ENCODE measurements at regions of chr15 and their contacts with region 1.

Region 1: GRCh38 chr15:65184868-65185738 is at the start of gene CLPX:
- DNase-seq: peak; percentile 87
- ATAC-seq: peak; percentile 88
- H3K4me3 Mint-ChIP-seq: peak within 1 kb of the TSS; percentile 93
- H3K27ac Mint-ChIP-seq: peak within 1 kb of the TSS; percentile 89
- H3K4me1 Mint-ChIP-seq: peaks cover 26% of the 10 kb centered on the region
- H3K27me3 Mint-ChIP-seq: no peaks in the 10 kb centered on the region
- CTCF ChIP-seq: no peak
- total RNA-seq, gene CLPX: 52.2 and 53.5 TPM in 2 replicates

Region 2: GRCh38 chr15:64938192-64938591 is 246.9 kb before region 1 on chr15:
- CTCF ChIA-PET with region 1: no interaction called
- POLR2A ChIA-PET with region 1: interaction called, 11 read pairs
- intact Hi-C with region 1: no loop called
- DNase-seq: no peak
- ATAC-seq: no peak
- H3K4me3 Mint-ChIP-seq: no peak overlapping the region
- H3K27ac Mint-ChIP-seq: no peak overlapping the region
- H3K4me1 Mint-ChIP-seq: no peaks in the 10 kb centered on the region
- H3K27me3 Mint-ChIP-seq: no peaks in the 10 kb centered on the region
- CTCF ChIP-seq: no peak

Region 3: DNA sequence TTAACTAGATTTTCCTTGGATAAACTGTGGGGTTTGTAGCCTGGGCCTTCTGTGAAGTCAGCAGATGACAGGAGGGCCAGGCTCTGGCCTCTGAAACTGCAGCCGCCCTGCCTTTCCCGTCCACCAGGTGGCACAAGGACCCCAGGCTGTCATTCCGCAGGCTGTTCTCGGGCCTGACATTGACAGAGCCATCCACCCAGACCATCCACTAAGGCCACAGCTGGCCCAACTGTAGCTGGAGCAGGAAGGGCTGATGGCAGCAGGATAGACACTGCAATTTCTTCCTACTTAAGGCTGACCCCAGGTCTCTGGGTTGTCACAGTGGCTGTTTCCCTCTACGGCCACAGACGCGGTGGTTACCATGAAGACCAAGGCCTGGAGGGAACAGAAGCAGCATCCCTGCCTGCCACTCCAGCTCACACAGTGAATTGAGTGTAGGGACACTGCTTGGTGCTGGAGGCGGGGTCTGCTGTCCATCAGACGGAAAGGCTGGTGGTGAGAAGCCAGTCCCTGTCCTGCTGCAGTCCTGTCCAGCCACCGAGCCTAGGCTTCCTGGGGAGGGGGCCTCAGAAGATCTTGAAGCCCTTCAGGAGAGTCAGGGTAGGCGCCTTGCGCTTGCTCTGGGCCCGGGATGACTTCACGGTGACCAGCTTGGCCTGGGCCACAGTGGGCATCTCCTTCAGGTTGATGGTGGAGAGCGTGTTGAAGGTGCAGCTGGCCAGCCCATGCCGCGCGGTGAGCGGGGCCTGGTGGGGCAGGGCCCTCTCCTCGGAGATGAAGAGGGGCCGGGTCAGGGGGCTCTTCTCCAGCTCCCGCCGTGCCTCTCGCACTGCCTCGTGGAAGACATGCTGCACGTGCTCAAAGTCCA is 130.5 kb before region 1 on chr15:
- CTCF ChIA-PET with region 1: no interaction called
- POLR2A ChIA-PET with region 1: interaction called, 5 read pairs
- intact Hi-C with region 1: loop called (anchors 10 kb)
- DNase-seq: peak; percentile 44
- ATAC-seq: peak; percentile 61
- H3K4me3 Mint-ChIP-seq: no peak overlapping the region
- H3K27ac Mint-ChIP-seq: no peak overlapping the region
- H3K4me1 Mint-ChIP-seq: peaks cover 12% of the 10 kb centered on the region
- H3K27me3 Mint-ChIP-seq: no peaks in the 10 kb centered on the region
- CTCF ChIP-seq: no peak

Region 4: DNA sequence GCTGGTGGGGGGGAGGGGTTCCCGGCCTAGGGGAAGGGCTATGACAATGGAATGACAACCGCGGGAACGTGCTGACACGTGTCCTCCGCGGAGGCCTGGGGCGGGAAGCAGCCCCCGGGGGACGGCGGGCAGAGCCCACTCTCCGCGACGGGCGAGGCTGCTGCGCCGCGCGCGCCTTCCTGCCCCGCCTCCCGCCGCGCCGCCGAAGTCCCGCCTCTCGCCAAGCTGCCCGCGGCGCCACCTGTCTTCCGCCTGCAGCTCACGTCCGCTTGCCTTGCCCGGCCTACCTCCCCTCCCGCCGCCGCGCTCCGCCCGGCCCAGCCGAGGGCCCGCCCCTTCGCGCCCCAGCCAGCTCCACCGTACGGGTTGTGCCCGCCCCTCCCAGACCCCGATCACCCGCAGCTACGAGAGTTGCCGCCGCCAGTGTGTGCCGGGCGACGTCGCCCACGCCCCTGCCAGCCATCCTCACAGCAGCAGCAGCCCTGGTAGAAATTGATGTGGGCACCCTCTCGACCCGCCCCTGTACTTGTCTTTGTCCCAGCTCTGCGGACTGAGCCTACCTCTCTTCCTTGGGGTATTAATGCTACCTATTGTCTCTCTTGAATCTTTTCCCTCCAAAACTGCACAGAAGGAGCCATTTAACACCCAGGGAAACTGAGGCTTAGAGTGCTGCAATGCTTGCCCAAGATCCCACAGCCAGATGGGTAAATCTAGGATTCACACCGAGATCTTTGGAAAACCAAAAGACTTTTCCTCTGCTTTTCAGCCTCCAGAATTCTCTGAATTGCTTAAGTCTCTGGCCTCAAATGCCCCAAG is 101.8 kb after region 1 on chr15 and contains the start of gene PARP16:
- CTCF ChIA-PET with region 1: interaction called, 5 read pairs
- POLR2A ChIA-PET with region 1: interaction called, 64 read pairs
- intact Hi-C with region 1: loop called (anchors 1 kb)
- DNase-seq: peak; percentile 94
- ATAC-seq: peak; percentile 96
- H3K4me3 Mint-ChIP-seq: peak within 1 kb of the TSS; percentile 85
- H3K27ac Mint-ChIP-seq: peak within 1 kb of the TSS; percentile 90
- H3K4me1 Mint-ChIP-seq: peaks cover 27% of the 10 kb centered on the region
- H3K27me3 Mint-ChIP-seq: no peaks in the 10 kb centered on the region
- CTCF ChIP-seq: no peak
- total RNA-seq, gene PARP16: 11.2 and 11.5 TPM in 2 replicates

Region 5: DNA sequence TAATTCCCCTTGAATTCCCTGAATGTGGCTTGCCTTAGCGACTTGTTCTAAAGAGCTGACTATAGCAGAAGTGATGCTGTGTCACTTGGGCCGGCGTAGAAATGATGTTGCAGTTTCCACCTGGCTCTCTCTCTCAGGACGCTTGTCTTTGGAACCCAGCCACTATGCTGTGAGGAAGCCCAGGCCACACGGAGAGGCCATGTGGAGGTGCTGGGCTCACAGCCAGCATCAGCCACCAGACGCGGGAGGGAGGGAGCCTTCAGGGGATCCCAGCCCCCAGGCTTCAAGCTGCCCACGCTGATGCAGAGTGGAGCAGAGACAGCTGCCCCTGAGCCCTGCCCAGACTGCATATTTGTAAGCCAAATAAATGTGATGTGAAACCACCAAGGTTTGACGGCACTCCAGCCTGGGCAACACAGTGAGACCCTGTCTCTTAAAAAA is 138.0 kb after region 1 on chr15:
- CTCF ChIA-PET with region 1: no interaction called
- POLR2A ChIA-PET with region 1: no interaction called
- intact Hi-C with region 1: no loop called
- DNase-seq: no peak
- ATAC-seq: no peak
- H3K4me3 Mint-ChIP-seq: no peak overlapping the region
- H3K27ac Mint-ChIP-seq: no peak overlapping the region
- H3K4me1 Mint-ChIP-seq: peaks cover 2% of the 10 kb centered on the region
- H3K27me3 Mint-ChIP-seq: peaks cover 25% of the 10 kb centered on the region
- CTCF ChIP-seq: no peak

Region 6: GRCh38 chr15:65516997-65517865 is 332.1 kb after region 1 on chr15 and contains the start of gene DPP8:
- CTCF ChIA-PET with region 1: no interaction called
- POLR2A ChIA-PET with region 1: interaction called, 6 read pairs
- intact Hi-C with region 1: loop called (anchors 1 kb)
- DNase-seq: peak; percentile 91
- ATAC-seq: peak; percentile 94
- H3K4me3 Mint-ChIP-seq: peak within 1 kb of the TSS; percentile 96
- H3K27ac Mint-ChIP-seq: peak within 1 kb of the TSS; percentile 89
- H3K4me1 Mint-ChIP-seq: peaks cover 37% of the 10 kb centered on the region
- H3K27me3 Mint-ChIP-seq: no peaks in the 10 kb centered on the region
- CTCF ChIP-seq: no peak
- total RNA-seq, gene DPP8: 43.0 and 52.2 TPM in 2 replicates